Cardiac septum (tissue), 1 donor: ENCODE measurements at regions of chr16 and their contacts with region 1.

Region 1: DNA sequence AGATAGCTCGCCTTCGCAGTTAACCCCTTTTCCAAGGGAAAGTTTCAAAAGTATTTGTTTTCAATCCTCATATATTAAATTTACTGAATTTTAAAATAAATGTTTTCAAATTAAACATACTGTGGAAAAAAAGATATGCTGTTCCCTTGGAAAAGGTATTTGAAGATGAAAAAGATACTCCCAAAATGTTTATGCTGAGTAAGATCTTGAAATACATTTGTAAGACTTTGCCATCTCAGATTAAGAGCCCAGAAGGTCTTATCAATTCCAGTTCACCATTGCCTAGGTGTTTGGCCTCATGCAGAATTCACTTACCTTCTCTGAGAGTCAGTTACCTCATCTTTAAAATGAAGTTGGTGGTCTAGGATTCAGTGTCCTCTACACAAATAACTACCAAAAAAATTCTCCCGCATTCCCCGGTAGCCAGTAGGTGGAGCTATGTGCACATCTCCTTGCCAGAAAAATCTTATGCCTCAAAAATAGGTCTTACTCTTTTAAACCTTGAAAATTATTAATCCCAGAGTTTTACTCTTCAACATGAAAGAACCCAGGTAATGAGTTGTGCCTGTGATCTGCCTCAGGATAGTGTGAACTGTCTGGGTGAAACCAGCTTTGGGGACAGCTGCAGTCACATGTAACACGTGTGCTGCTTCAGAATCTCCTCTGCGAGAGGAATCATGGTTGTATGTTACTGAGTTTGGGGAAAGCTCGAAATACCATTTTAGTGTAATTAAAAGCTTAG is 178.3 kb downstream of the MRTFB start:
- DNase-seq: no peak

Region 2: GRCh38 chr16:14219983-14220382 is 29.5 kb before region 1 on chr16:
- intact Hi-C with region 1: no loop called
- DNase-seq: no peak

Region 3: GRCh38 chr16:14337303-14338191 is 88.1 kb after region 1 on chr16:
- intact Hi-C with region 1: no loop called
- DNase-seq: no peak

Region 4: GRCh38 chr16:14529010-14529669 is 279.7 kb after region 1 on chr16:
- intact Hi-C with region 1: loop called (anchors 2 kb)
- DNase-seq: no peak